ENCODE measurements at regions of chr7 and their contacts with region 1.

Region 1: DNA sequence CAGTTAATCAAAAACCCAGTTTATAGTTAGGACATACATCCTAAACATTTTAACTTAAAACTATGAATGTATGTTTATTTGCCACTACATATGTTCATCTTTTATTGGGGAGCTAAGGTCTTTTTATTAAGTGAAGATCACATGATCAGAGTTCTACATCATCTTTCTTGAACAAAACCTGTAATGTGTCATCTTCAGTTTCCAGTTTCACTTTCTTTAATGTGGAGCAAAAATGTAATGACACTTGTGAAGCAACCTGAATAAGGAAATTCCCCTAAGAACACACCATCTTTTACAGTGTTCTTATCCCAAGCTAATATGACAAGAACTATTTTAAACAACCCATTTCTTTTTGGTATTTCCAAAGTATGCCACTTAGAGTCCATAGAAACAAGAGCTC is 166.7 kb upstream of the BET1 start:
- DNase-seq: no peak
- ATAC-seq: no peak
- H3K4me3 ChIP-seq: no peak overlapping the region
- H3K27ac ChIP-seq: no peak overlapping the region
- H3K4me1 ChIP-seq: no peaks in the 10 kb centered on the region
- CTCF ChIP-seq: no peak
- EP300 ChIP-seq: no peak
- POLR2A ChIP-seq: no peak
- RAD21 ChIP-seq: no peak

Region 2: DNA sequence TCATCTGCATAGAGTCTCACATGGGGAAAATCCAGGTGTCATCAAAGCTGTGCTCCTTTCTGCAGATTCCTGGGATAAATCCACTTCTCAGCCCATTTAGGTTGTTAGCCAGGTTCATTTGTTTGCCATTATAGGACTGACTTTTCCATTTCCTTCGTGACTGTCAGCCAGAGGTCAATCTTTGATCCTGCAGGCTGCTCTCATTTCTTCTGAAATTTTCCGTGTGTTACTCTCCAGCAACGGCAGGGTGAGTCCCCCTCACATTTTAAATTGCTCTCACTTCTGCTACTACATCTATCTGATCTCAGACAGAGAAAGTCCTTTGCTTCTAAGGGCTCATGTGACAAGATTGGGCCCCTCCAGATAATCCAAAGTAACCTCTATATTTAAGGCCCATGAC is 16.0 kb before region 1 on chr7:
- CTCF ChIA-PET with region 1: no interaction called
- POLR2A ChIA-PET with region 1: no interaction called
- DNase-seq: peak in 1 of 2 experiments; percentile 13
- ATAC-seq: peak in 1 of 2 experiments; percentile 56; a peak in 1 of 6 replicates
- H3K4me3 ChIP-seq: no peak overlapping the region
- H3K27ac ChIP-seq: peak overlapping the region; percentile 19 to 70; a peak in 4 of 6 replicates
- H3K4me1 ChIP-seq: peaks cover 11% of the 10 kb centered on the region
- CTCF ChIP-seq: no peak
- EP300 ChIP-seq: no peak
- POLR2A ChIP-seq: no peak
- RAD21 ChIP-seq: no peak

Region 3: GRCh38 chr7:94183289-94183749 is 12.5 kb after region 1 on chr7:
- CTCF ChIA-PET with region 1: interaction called, 11 read pairs
- POLR2A ChIA-PET with region 1: no interaction called
- DNase-seq: peak; percentile 65 to 98
- ATAC-seq: peak; percentile 99
- H3K4me3 ChIP-seq: no peak overlapping the region; the same call in 2 of the 3 replicates
- H3K27ac ChIP-seq: peak overlapping the region; percentile 91 to 94
- H3K4me1 ChIP-seq: peaks cover 23% of the 10 kb centered on the region
- CTCF ChIP-seq: no peak; the same call in 2 of the 3 replicates
- EP300 ChIP-seq: peak; percentile 97 to 98
- POLR2A ChIP-seq: no peak
- RAD21 ChIP-seq: peak in 1 of 2 experiments; percentile 72; a peak in 4 of 5 replicates

Region 4: GRCh38 chr7:94458041-94458440 is 287.2 kb after region 1 on chr7:
- CTCF ChIA-PET with region 1: no interaction called
- POLR2A ChIA-PET with region 1: no interaction called
- DNase-seq: no peak
- ATAC-seq: no peak
- H3K4me3 ChIP-seq: no peak overlapping the region
- H3K27ac ChIP-seq: no peak overlapping the region
- H3K4me1 ChIP-seq: no peaks in the 10 kb centered on the region
- CTCF ChIP-seq: no peak
- EP300 ChIP-seq: no peak
- POLR2A ChIP-seq: no peak
- RAD21 ChIP-seq: no peak